GM12878 (cell line): ENCODE measurements at regions of chr4 and their contacts with region 1.

Region 1: DNA sequence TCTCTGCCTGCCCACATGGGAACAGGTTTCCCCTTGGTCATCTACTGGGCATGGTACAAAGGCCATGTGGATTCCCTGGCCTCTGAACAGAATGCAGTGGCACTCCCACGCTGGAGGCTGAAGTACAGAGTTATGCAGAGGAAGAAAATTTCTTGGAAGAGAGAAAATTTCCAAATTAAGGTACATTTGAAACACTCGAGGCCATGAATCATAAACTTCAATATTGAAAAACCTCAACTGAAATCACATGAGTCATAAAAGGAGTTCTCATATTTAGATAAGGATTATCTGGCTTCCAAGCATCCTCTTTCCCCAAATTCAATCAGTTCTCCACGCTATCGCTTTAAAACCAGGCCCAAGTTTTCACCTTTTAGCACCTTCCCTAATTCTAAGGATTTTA is 28.1 kb upstream of the TXK start:
- DNase-seq: no peak
- ATAC-seq: no peak
- H3K4me3 ChIP-seq: no peak overlapping the region
- H3K27ac ChIP-seq: no peak overlapping the region
- H3K4me1 ChIP-seq: no peaks in the 10 kb centered on the region
- H3K27me3 ChIP-seq: no peaks in the 10 kb centered on the region
- CTCF ChIP-seq: no peak
- EP300 ChIP-seq: no peak
- POLR2A ChIP-seq: no peak
- RAD21 ChIP-seq: no peak

Region 2: GRCh38 chr4:48173056-48173991 is 11.2 kb after region 1 on chr4:
- CTCF ChIA-PET with region 1: interaction called, 4 read pairs
- POLR2A ChIA-PET with region 1: interaction called, 5 read pairs
- RAD21 ChIA-PET with region 1: interaction called, 3 read pairs
- SMC1A ChIA-PET with region 1: interaction called, 20 read pairs
- in situ Hi-C with region 1: no loop called
- intact Hi-C with region 1: no loop called
- DNase-seq: peak; percentile 55
- ATAC-seq: peak; percentile 85
- H3K4me3 ChIP-seq: no peak overlapping the region
- H3K27ac ChIP-seq: peak overlapping the region; percentile 59
- H3K4me1 ChIP-seq: peaks cover 36% of the 10 kb centered on the region
- H3K27me3 ChIP-seq: no peaks in the 10 kb centered on the region
- CTCF ChIP-seq: no peak
- EP300 ChIP-seq: no peak; a peak in 1 of 4 replicates
- POLR2A ChIP-seq: no peak
- RAD21 ChIP-seq: no peak